Activated CD8-positive, alpha-beta T cell treated with anti-CD3 and anti-CD28 coated beads, Interleukin-2, amount 10 ng/mL, durations not matched to agents 7 days and 5 days (primary cell): ENCODE measurements at regions of chr17 and their contacts with region 1.

Region 1: DNA sequence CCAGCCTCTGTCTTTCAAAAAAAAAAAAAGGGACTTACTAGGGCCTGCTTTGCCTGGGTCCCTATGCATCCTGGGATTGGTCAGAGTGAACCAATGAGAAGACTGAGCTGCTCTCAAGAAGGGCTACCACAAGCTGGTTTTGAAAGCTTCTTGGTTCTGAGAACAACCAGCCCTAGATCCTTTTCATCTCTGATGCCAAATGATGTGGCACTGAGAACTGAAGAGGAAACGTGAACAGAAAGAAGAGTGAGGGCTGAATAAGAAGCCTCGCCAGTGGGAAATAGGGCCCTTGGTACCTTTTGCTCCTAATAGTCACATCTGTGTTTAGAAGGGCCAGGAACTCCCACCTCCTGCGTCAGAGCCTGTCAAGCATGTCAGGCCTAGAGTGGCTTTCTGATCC is 10.7 kb downstream of the TACO1 start:
- DNase-seq: peak; percentile 43
- ATAC-seq: peak; percentile 61
- H3K4me3 Mint-ChIP-seq: peak overlapping the region; percentile 38
- H3K27ac Mint-ChIP-seq: peak overlapping the region; percentile 86
- H3K4me1 Mint-ChIP-seq: peaks cover 28% of the 10 kb centered on the region
- H3K27me3 Mint-ChIP-seq: no peaks in the 10 kb centered on the region

Region 2: GRCh38 chr17:63249256-63250004 is 361.9 kb before region 1 on chr17:
- CTCF ChIA-PET with region 1: no interaction called
- POLR2A ChIA-PET with region 1: no interaction called
- DNase-seq: no peak
- ATAC-seq: no peak
- H3K4me3 Mint-ChIP-seq: no peak overlapping the region
- H3K27ac Mint-ChIP-seq: no peak overlapping the region
- H3K4me1 Mint-ChIP-seq: no peaks in the 10 kb centered on the region
- H3K27me3 Mint-ChIP-seq: no peaks in the 10 kb centered on the region

Region 3: GRCh38 chr17:63406689-63407330 is 204.5 kb before region 1 on chr17:
- CTCF ChIA-PET with region 1: interaction called, 19 read pairs
- POLR2A ChIA-PET with region 1: no interaction called
- DNase-seq: peak; percentile 84
- ATAC-seq: peak; percentile 93
- H3K4me3 Mint-ChIP-seq: no peak overlapping the region
- H3K27ac Mint-ChIP-seq: no peak overlapping the region
- H3K4me1 Mint-ChIP-seq: peaks cover 1% of the 10 kb centered on the region
- H3K27me3 Mint-ChIP-seq: no peaks in the 10 kb centered on the region

Region 4: GRCh38 chr17:63425482-63425881 is 185.9 kb before region 1 on chr17:
- CTCF ChIA-PET with region 1: interaction called, 177 read pairs
- POLR2A ChIA-PET with region 1: interaction called, 4 read pairs
- DNase-seq: peak; percentile 83
- ATAC-seq: peak; percentile 82
- H3K4me3 Mint-ChIP-seq: no peak overlapping the region
- H3K27ac Mint-ChIP-seq: no peak overlapping the region
- H3K4me1 Mint-ChIP-seq: peaks cover 52% of the 10 kb centered on the region
- H3K27me3 Mint-ChIP-seq: no peaks in the 10 kb centered on the region

Region 5: GRCh38 chr17:63445065-63445978 is 166.0 kb before region 1 on chr17:
- CTCF ChIA-PET with region 1: interaction called, 12 read pairs
- POLR2A ChIA-PET with region 1: no interaction called
- DNase-seq: no peak
- ATAC-seq: peak; percentile 30
- H3K4me3 Mint-ChIP-seq: peak overlapping the region; percentile 52
- H3K27ac Mint-ChIP-seq: no peak overlapping the region
- H3K4me1 Mint-ChIP-seq: peaks cover 33% of the 10 kb centered on the region
- H3K27me3 Mint-ChIP-seq: peaks cover 18% of the 10 kb centered on the region

Region 6: GRCh38 chr17:63549946-63550807 is 61.2 kb before region 1 on chr17 and contains the start of gene DCAF7:
- CTCF ChIA-PET with region 1: interaction called, 37 read pairs
- POLR2A ChIA-PET with region 1: no interaction called
- DNase-seq: peak; percentile 100
- ATAC-seq: peak; percentile 96
- H3K4me3 Mint-ChIP-seq: peak within 1 kb of the TSS; percentile 99
- H3K27ac Mint-ChIP-seq: peak within 1 kb of the TSS; percentile 97
- H3K4me1 Mint-ChIP-seq: peaks cover 27% of the 10 kb centered on the region
- H3K27me3 Mint-ChIP-seq: no peaks in the 10 kb centered on the region
- total RNA-seq, gene DCAF7: 127 TPM

Region 7: GRCh38 chr17:63621766-63622519 is 10.6 kb after region 1 on chr17 and contains the start of gene MAP3K3:
- CTCF ChIA-PET with region 1: interaction called, 48 read pairs
- POLR2A ChIA-PET with region 1: interaction called, 14 read pairs
- DNase-seq: peak; percentile 99
- ATAC-seq: peak; percentile 94
- H3K4me3 Mint-ChIP-seq: peak within 1 kb of the TSS; percentile 96
- H3K27ac Mint-ChIP-seq: peak within 1 kb of the TSS; percentile 89
- H3K4me1 Mint-ChIP-seq: peaks cover 32% of the 10 kb centered on the region
- H3K27me3 Mint-ChIP-seq: peaks cover 11% of the 10 kb centered on the region
- total RNA-seq, gene MAP3K3: 31.4 to 32.8 TPM